Right lobe of liver (tissue), 6 donors: ENCODE measurements at regions of chr3 and their contacts with region 1.

Region 1: GRCh38 chr3:170689893-170690660 is 104.2 kb upstream of the SLC7A14 start:
- DNase-seq: peak; percentile 73 to 77 (median 74)
- ATAC-seq: peak; percentile 92 to 97 (median 96)
- H3K4me3 ChIP-seq: no peak overlapping the region
- H3K27ac ChIP-seq: no peak overlapping the region
- H3K4me1 ChIP-seq: no peaks in the 10 kb centered on the region
- H3K27me3 ChIP-seq: no peaks in the 10 kb centered on the region
- CTCF ChIP-seq: peak; percentile 70 to 92 (median 82)
- POLR2A ChIP-seq: no peak

Region 2: GRCh38 chr3:170414202-170414663 is 275.8 kb before region 1 on chr3:
- intact Hi-C with region 1: loop called in 1 of 2 experiments (anchors 5 kb)
- DNase-seq: no peak
- ATAC-seq: peak; percentile 82 to 91 (median 86)
- H3K4me3 ChIP-seq: no peak overlapping the region
- H3K27ac ChIP-seq: no peak overlapping the region
- H3K4me1 ChIP-seq: peaks cover 0 to 10% (median 0%) of the 10 kb centered on the region in 4 donors
- H3K27me3 ChIP-seq: peaks cover 0 to 8% of the 10 kb centered on the region in 2 donors
- CTCF ChIP-seq: peak; percentile 96
- POLR2A ChIP-seq: no peak

Region 3: DNA sequence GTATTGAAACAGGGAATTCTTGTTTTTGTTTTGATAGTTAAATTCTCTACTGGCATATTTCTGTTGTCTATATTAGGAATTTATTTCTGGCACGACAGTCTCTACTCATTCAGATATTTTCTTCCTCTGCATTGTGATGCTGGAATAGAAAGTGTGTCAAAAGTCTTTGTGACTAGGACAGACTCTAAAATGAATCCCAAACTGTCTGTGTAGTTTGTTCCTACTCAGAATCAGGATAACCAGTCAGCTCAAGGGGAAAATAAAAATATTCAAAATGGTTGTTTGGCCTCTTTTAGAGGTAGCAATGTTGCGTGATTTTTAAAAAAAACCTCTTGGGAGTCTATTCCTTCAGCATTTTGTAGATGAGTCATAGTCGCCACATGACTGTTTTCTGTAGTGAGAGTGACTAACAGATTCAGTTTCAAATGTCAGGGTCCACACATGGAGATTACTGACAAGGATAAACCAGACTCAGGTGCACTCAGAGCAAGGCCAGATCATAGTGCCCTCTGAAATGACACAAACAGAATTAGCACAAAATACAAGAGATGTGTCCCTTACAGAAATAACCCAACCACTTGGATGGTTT is 117.3 kb before region 1 on chr3:
- intact Hi-C with region 1: loop called in 1 of 2 experiments (anchors 10 kb)
- DNase-seq: no peak
- ATAC-seq: peak in 1 of 4 donors; percentile 22
- H3K4me3 ChIP-seq: no peak overlapping the region
- H3K27ac ChIP-seq: no peak overlapping the region
- H3K4me1 ChIP-seq: no peaks in the 10 kb centered on the region
- H3K27me3 ChIP-seq: no peaks in the 10 kb centered on the region
- CTCF ChIP-seq: no peak
- POLR2A ChIP-seq: no peak

Region 4: GRCh38 chr3:171038342-171039138 is 348.5 kb after region 1 on chr3:
- intact Hi-C with region 1: no loop called
- DNase-seq: no peak
- ATAC-seq: no peak
- H3K4me3 ChIP-seq: no peak overlapping the region
- H3K27ac ChIP-seq: no peak overlapping the region
- H3K4me1 ChIP-seq: peaks cover 0 to 9% (median 4%) of the 10 kb centered on the region in 4 donors
- H3K27me3 ChIP-seq: no peaks in the 10 kb centered on the region
- CTCF ChIP-seq: no peak
- POLR2A ChIP-seq: no peak